ENCODE measurements at regions of chr2 and their contacts with region 1.

Region 1: GRCh38 chr2:118763797-118764196 is 83.7 kb downstream of the EN1 start:
- DNase-seq: peak; percentile 27 to 65
- H3K4me3 ChIP-seq: no peak overlapping the region
- H3K27ac ChIP-seq: no peak overlapping the region
- H3K4me1 ChIP-seq: peaks cover 0 to 2% (median 0%) of the 10 kb centered on the region in 4 experiments; a peak in 2 of 7 replicates
- H3K27me3 ChIP-seq: peaks cover 0 to 10% (median 6%) of the 10 kb centered on the region in 4 experiments; a peak in 5 of 7 replicates
- CTCF ChIP-seq: peak; percentile 56 to 81 (median 75)
- EP300 ChIP-seq: no peak
- POLR2A ChIP-seq: no peak
- RAD21 ChIP-seq: peak; percentile 84 to 86

Region 2: DNA sequence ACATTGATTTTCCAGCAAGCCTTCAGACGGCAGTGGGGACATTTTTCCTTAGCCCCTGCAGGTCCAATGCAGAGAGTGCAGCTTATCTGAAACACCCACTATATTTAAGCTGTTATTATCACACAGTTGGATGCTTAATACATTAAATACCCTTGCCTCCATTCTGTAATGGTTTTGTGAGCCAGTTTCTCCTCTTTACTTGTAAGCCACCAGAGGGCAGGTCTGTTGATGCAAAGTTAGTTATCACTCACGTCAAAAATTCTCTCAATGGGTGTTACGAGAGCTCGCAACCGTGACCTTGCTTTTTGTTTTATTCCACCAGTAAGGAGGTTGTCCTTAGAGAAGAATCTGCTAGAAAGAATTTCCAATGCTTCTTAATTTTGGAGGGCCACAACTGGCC is 485.8 kb before region 1 on chr2:
- CTCF ChIA-PET with region 1: no interaction called
- POLR2A ChIA-PET with region 1: no interaction called
- DNase-seq: no peak
- H3K4me3 ChIP-seq: no peak overlapping the region
- H3K27ac ChIP-seq: no peak overlapping the region
- H3K4me1 ChIP-seq: peaks cover 0 to 4% (median 2%) of the 10 kb centered on the region in 4 experiments; a peak in 2 of 7 replicates
- H3K27me3 ChIP-seq: no peaks in the 10 kb centered on the region; a peak in 2 of 7 replicates
- CTCF ChIP-seq: peak in 2 of 3 experiments; percentile 14 to 40; a peak in 1 of 4 replicates
- EP300 ChIP-seq: no peak
- POLR2A ChIP-seq: no peak
- RAD21 ChIP-seq: peak in 1 of 2 experiments; percentile 45; a peak in 2 of 4 replicates

Region 3: DNA sequence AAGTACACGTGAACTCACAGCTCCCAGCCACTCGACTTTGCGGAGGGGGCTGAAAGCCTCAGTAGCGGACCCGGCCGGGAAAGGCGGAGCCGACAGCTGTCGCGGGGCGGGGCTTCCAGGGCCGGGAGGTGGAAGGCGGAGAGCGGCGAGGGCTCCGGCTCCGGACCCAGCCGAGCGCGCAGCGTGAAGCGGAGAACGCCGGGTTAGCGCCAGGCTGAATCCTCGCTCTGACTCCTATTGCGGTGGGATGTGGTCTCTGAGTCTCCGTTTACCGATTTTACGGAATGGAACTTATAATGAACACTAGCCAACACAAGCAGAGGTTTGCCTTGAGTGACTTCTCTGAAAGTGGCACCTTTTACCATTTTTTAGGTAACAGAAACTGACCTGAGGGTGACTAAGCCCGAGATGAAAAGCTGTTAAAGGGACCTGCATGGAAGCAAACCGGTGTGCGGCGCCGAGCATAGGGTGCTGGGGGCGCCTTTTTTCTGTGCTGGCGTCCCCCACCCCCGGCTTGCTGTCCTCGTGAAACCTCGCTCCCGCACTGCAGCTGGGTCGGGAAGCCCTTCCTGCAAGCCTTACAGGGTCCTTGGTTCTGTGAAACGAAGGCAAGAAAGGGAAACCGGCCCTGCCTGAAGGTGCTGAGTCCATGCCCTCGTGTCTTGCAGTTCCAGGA is 10.8 kb after region 1 on chr2:
- CTCF ChIA-PET with region 1: interaction called, 10 read pairs
- POLR2A ChIA-PET with region 1: no interaction called
- DNase-seq: peak; percentile 21 to 88
- H3K4me3 ChIP-seq: peak overlapping the region; percentile 40 to 66 (median 52)
- H3K27ac ChIP-seq: no peak overlapping the region
- H3K4me1 ChIP-seq: no peaks in the 10 kb centered on the region; a peak in 3 of 7 replicates
- H3K27me3 ChIP-seq: peaks cover 5 to 38% (median 25%) of the 10 kb centered on the region in 4 experiments
- CTCF ChIP-seq: no peak
- EP300 ChIP-seq: no peak
- POLR2A ChIP-seq: no peak
- RAD21 ChIP-seq: no peak